Activated B cell treated with CpG ODN at 0.5 μM for 24 hours (primary cell): ENCODE measurements at regions of chr1 and their contacts with region 1.

Region 1: DNA sequence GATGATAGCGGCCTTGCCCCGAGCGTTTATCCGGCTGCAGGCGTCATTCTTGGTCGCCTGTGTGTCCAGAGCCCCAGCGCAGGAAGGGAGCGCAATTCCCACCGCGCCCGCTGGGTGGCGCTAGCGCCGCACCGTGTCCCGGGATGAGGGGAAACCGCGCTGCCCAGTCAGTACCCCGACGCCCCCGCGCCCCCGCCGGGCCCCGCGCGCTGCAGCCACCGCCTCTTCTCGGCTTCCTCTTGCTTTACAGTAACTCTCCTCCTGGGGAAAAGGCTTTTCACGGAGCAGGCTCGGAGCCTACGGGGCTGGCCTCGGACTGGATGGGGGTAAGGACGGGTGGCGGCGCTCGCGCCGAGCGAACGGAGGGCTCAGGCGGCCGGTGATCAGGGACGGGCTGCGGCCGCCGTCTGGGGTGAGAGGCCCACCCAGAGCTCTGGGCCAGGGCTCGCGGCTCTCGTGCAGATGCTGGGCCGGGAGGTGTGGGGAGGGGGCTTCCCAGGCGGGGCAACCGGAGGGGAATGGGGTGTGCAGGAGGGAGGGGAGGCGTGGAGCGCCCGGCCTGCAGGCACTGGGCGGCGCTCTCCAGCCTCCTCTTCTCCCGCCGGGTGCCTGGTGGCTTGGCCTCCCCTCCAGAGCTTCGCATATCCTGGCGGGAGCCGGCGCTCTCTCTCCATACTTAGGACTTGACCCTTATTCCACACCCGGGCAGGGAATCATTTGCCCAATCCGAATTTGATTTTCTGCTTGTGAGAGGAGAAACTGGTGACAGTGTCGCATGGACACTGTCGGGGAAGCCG is 29.8 kb downstream of the TEX35 start:
- DNase-seq: peak; percentile 100
- ATAC-seq: peak; percentile 82
- H3K4me3 Mint-ChIP-seq: peak overlapping the region; percentile 97
- H3K27ac Mint-ChIP-seq: peak overlapping the region; percentile 96
- H3K4me1 Mint-ChIP-seq: peaks cover 47% of the 10 kb centered on the region
- H3K27me3 Mint-ChIP-seq: no peaks in the 10 kb centered on the region
- CTCF ChIP-seq: peak; percentile 85

Region 2: DNA sequence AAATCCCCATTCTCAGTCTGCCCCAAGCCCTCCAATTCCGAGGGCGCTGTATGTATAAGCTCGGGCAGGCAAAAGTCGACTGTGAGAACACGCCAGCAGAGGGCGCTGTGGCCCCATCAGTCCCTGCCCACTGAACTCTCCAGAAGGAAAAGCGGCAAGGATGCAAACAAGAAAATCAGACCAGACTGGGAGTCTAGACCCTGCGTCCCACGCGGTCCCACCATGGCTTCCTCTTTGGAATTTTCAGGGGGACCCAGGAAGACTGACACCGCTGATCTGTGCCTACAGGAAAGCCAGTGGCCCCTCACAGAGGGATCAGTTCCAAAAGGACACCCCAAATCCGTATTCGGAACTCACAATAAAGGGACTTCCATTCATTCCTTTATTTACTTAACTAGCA is 10.4 kb before region 1 on chr1:
- CTCF ChIA-PET with region 1: interaction called, 10 read pairs
- POLR2A ChIA-PET with region 1: no interaction called
- intact Hi-C with region 1: no loop called
- DNase-seq: peak; percentile 77
- ATAC-seq: peak; percentile 93
- H3K4me3 Mint-ChIP-seq: no peak overlapping the region
- H3K27ac Mint-ChIP-seq: no peak overlapping the region
- H3K4me1 Mint-ChIP-seq: peaks cover 4% of the 10 kb centered on the region
- H3K27me3 Mint-ChIP-seq: no peaks in the 10 kb centered on the region
- CTCF ChIP-seq: peak; percentile 84

Region 3: DNA sequence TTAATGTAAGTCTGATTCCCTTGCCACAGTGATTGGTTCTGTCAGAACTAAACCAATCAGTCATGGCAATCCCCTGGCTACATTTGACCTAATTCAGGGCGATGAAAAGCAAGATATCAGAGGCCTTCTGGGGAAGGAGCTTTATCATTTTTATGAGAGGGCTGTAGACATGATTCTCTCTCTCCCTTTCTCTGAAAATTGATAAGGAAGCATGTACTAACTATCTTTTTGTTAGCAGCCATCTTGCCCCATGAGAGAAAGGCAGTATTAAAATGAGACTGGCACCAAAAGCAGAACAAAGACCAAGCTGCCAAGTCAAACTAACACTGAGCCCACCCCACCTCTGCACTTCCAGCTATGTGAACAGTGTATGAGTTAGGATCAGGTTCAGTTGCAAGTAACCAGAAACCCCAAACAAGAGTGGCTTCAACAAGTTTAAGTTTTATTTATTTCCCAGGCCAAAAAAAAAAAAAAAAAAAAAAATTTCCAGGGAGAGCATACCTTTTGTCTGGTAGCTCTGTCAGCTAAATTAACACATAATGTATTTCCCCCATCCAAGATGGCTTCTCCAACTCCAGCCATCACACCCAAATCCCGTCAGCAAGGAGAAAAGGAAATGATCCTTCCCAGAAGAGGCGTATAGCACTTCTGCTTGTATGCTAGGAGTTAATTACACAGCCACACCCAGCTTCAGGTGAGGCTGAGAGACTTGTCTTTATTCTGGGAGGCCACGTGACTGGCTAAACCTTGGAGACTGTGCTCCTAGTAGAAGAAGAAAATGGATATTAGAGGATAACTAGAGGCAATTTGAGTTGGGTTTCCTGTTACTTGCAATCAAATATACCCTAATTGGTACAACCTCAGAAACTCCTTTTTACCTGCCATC is 76.5 kb after region 1 on chr1:
- CTCF ChIA-PET with region 1: interaction called, 7 read pairs
- POLR2A ChIA-PET with region 1: interaction called, 6 read pairs
- intact Hi-C with region 1: loop called (anchors 1 kb)
- DNase-seq: no peak
- ATAC-seq: peak; percentile 98
- H3K4me3 Mint-ChIP-seq: peak overlapping the region; percentile 67
- H3K27ac Mint-ChIP-seq: peak overlapping the region; percentile 91
- H3K4me1 Mint-ChIP-seq: peaks cover 58% of the 10 kb centered on the region
- H3K27me3 Mint-ChIP-seq: no peaks in the 10 kb centered on the region
- CTCF ChIP-seq: no peak

Region 4: GRCh38 chr1:178749581-178750166 is 206.9 kb after region 1 on chr1:
- CTCF ChIA-PET with region 1: interaction called, 20 read pairs
- POLR2A ChIA-PET with region 1: interaction called, 8 read pairs
- intact Hi-C with region 1: loop called (anchors 1 kb)
- DNase-seq: no peak
- ATAC-seq: peak; percentile 38
- H3K4me3 Mint-ChIP-seq: no peak overlapping the region
- H3K27ac Mint-ChIP-seq: peak overlapping the region; percentile 83
- H3K4me1 Mint-ChIP-seq: peaks cover 64% of the 10 kb centered on the region
- H3K27me3 Mint-ChIP-seq: no peaks in the 10 kb centered on the region
- CTCF ChIP-seq: no peak

Region 5: DNA sequence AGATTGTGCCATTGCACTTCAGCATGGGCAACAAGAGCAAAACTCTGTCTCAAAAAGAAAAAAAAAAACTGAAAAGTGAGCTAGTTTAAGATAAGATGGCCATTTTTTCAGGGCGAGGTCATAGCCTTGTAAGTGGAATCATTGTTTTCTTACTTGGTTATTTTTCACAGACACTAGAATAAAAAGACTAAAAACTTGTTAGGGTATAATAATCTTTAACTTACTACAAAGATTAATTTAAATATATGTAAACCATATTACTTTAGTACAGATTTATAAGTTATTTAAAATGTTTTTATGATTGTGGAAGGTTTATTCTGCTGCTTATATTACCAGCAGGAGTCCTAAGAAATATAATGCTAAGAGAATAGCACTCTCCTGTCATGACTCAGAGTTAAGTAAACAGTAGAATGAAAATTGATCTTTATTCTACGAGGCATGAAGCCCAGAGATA is 304.7 kb after region 1 on chr1:
- CTCF ChIA-PET with region 1: interaction called, 11 read pairs
- POLR2A ChIA-PET with region 1: no interaction called
- intact Hi-C with region 1: no loop called
- DNase-seq: no peak
- ATAC-seq: no peak
- H3K4me3 Mint-ChIP-seq: no peak overlapping the region
- H3K27ac Mint-ChIP-seq: peak overlapping the region; percentile 24
- H3K4me1 Mint-ChIP-seq: no peaks in the 10 kb centered on the region
- H3K27me3 Mint-ChIP-seq: no peaks in the 10 kb centered on the region
- CTCF ChIP-seq: no peak

Region 6: DNA sequence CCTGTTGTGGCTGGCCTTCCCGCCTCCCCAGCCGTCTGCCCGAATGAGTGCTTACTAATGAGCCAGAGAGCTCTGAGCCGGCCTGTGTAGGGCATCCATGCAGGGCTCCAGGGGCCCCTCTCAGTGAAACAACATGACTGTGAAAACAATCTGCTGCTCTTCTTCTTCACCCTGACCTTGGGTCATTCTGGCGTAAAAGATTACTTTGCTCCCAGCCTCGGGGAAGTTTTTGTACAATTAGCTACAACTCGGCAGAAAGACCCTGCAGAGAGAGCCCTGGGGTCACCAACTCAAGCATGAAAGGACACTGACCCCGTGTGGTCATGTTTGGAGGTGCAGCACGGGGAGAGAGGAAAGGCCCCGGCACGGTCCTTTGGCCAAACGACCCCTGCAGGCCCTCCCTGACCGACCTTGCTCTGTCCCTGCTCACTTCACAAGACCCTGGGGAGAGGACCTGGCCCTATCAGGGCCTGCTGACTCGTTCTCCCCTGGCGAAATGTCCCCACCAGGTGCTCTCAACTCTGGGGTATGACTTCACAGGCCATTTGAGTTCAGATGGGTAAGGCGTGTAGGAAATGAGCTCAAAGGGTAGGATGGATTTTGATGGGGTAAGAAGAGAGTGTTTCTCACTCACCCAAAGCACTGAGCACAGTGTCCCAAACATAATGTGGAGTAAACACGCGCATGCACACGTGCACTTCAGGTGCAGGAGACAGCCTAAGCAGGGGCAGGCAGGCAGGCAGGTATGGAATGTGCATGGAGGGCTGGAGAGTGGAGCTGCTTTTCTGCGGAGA is 460.0 kb after region 1 on chr1:
- CTCF ChIA-PET with region 1: interaction called, 100 read pairs
- POLR2A ChIA-PET with region 1: interaction called, 17 read pairs
- intact Hi-C with region 1: loop called (anchors 1 kb)
- DNase-seq: peak; percentile 79
- ATAC-seq: peak; percentile 95
- H3K4me3 Mint-ChIP-seq: peak overlapping the region; percentile 26
- H3K27ac Mint-ChIP-seq: no peak overlapping the region
- H3K4me1 Mint-ChIP-seq: peaks cover 15% of the 10 kb centered on the region
- H3K27me3 Mint-ChIP-seq: no peaks in the 10 kb centered on the region
- CTCF ChIP-seq: peak; percentile 96